ENCODE measurements at regions of chr5 and their contacts with region 1.

Region 1: GRCh38 chr5:150190996-150191395 is 1.1 kb downstream of the SLC6A7 start:
- DNase-seq: no peak
- H3K27ac ChIP-seq: no peak overlapping the region
- CTCF ChIP-seq: no peak

Region 2: GRCh38 chr5:150103666-150104549 is 87.1 kb before region 1 on chr5:
- CTCF ChIA-PET with region 1: interaction called, 3 read pairs
- POLR2A ChIA-PET with region 1: interaction called, 11 read pairs
- DNase-seq: no peak
- H3K27ac ChIP-seq: no peak overlapping the region
- CTCF ChIP-seq: no peak

Region 3: DNA sequence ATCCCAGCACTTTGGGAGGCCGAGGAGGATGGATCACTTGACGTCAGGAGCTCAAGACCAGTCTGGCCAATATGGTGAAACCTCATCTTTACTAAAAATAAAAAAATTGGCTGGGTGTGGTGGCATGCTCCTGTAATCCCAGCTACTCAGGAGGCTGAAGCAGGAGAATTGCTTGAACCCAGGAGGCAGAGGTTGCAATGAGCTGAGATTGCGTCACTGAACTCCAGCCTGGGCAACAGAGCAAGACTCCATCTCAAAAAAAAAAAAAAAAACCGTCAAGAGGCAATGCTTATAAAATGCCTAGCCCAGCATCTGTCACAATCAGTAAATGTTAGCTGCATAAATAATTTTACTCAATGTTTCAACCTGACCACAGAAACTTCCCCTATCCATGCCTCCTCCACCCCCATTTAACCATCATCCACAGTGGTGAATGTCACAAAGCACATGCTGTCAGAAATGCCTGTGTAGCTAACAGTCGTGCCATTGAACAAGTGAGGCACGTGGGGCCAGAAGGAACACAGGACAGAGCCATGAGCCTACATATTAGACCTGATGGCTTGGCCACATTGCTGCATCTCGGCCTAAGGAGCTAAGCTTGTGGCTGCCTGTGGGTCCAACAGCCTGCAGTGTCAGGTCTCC is 149.7 kb after region 1 on chr5:
- CTCF ChIA-PET with region 1: no interaction called
- POLR2A ChIA-PET with region 1: no interaction called
- DNase-seq: no peak
- H3K27ac ChIP-seq: no peak overlapping the region
- CTCF ChIP-seq: no peak